ENCODE measurements at regions of chr9 and their contacts with region 1.

Region 1: GRCh38 chr9:34222451-34222850 is 43.6 kb downstream of the UBAP1 start:
- DNase-seq: no peak
- H3K4me3 ChIP-seq: no peak overlapping the region
- H3K4me3 Mint-ChIP-seq: no peak overlapping the region
- H3K27ac Mint-ChIP-seq: no peak overlapping the region
- H3K4me1 ChIP-seq: 0 out of 2 replicates have a peak, but pooled peaks cover 5% of the 10 kb centered on the region
- H3K4me1 Mint-ChIP-seq: no peaks in the 10 kb centered on the region
- H3K27me3 ChIP-seq: no peaks in the 10 kb centered on the region
- H3K27me3 Mint-ChIP-seq: no peaks in the 10 kb centered on the region
- CTCF ChIP-seq: no peak

Region 2: DNA sequence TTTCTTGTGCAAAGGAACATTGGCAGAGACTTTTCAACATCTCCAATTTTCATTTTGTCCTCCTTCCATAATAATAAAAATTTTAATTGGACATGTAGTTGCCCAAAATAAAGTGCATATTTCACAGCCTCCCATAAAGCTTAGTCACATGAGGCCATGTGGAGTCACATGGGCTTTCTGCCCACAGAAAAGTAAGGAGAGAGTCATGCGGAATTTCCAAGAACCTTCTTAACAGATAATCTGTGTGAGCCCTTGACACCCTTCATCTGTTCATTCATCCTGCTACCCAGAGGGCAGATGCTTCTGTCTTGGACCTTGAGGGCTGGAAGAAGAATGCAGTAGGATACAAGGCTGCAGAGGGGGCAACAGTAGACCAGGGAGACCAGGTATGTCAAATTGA is 1281.7 kb before region 1 on chr9:
- CTCF ChIA-PET with region 1: no interaction called
- POLR2A ChIA-PET with region 1: no interaction called
- intact Hi-C with region 1: no loop called
- DNase-seq: no peak
- H3K4me3 ChIP-seq: no peak overlapping the region
- H3K4me3 Mint-ChIP-seq: no peak overlapping the region
- H3K27ac Mint-ChIP-seq: no peak overlapping the region
- H3K4me1 ChIP-seq: no peaks in the 10 kb centered on the region
- H3K4me1 Mint-ChIP-seq: no peaks in the 10 kb centered on the region
- H3K27me3 ChIP-seq: no peaks in the 10 kb centered on the region
- H3K27me3 Mint-ChIP-seq: no peaks in the 10 kb centered on the region
- CTCF ChIP-seq: no peak

Region 3: DNA sequence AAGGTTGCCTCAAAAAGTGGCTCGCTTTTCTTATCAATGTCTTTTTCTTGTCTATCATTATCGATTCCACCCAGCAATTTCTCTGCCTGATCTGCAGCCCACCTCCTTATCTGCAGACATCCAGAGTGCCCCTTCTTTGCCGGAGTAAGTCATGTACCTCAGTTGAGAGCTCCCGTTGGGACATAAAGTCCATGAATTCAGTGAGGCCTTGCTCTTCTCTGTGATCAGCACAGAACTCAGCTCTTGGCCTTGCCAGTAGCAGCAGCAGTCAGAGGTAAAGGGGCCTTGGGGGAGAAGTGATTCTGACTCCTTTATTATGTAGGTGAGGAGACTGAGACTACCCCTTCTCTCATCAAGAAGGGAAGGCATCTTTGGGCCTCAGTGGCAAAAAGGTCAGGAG is 71.1 kb before region 1 on chr9:
- CTCF ChIA-PET with region 1: no interaction called
- POLR2A ChIA-PET with region 1: interaction called, 11 read pairs
- intact Hi-C with region 1: no loop called
- DNase-seq: no peak
- H3K4me3 ChIP-seq: no peak overlapping the region
- H3K4me3 Mint-ChIP-seq: no peak overlapping the region
- H3K27ac Mint-ChIP-seq: no peak overlapping the region
- H3K4me1 ChIP-seq: no peaks in the 10 kb centered on the region
- H3K4me1 Mint-ChIP-seq: no peaks in the 10 kb centered on the region
- H3K27me3 ChIP-seq: no peaks in the 10 kb centered on the region
- H3K27me3 Mint-ChIP-seq: no peaks in the 10 kb centered on the region
- CTCF ChIP-seq: no peak

Region 4: GRCh38 chr9:34200092-34200491 is 22.4 kb before region 1 on chr9:
- CTCF ChIA-PET with region 1: no interaction called
- POLR2A ChIA-PET with region 1: no interaction called
- intact Hi-C with region 1: no loop called
- DNase-seq: no peak
- H3K4me3 ChIP-seq: no peak overlapping the region
- H3K4me3 Mint-ChIP-seq: no peak overlapping the region
- H3K27ac Mint-ChIP-seq: no peak overlapping the region
- H3K4me1 ChIP-seq: no peaks in the 10 kb centered on the region
- H3K4me1 Mint-ChIP-seq: peaks cover 6% of the 10 kb centered on the region
- H3K27me3 ChIP-seq: no peaks in the 10 kb centered on the region
- H3K27me3 Mint-ChIP-seq: no peaks in the 10 kb centered on the region
- CTCF ChIP-seq: no peak